CD4-positive, alpha-beta T cell (primary cell): ENCODE measurements at regions of chr2 and their contacts with region 1.

Region 1: DNA sequence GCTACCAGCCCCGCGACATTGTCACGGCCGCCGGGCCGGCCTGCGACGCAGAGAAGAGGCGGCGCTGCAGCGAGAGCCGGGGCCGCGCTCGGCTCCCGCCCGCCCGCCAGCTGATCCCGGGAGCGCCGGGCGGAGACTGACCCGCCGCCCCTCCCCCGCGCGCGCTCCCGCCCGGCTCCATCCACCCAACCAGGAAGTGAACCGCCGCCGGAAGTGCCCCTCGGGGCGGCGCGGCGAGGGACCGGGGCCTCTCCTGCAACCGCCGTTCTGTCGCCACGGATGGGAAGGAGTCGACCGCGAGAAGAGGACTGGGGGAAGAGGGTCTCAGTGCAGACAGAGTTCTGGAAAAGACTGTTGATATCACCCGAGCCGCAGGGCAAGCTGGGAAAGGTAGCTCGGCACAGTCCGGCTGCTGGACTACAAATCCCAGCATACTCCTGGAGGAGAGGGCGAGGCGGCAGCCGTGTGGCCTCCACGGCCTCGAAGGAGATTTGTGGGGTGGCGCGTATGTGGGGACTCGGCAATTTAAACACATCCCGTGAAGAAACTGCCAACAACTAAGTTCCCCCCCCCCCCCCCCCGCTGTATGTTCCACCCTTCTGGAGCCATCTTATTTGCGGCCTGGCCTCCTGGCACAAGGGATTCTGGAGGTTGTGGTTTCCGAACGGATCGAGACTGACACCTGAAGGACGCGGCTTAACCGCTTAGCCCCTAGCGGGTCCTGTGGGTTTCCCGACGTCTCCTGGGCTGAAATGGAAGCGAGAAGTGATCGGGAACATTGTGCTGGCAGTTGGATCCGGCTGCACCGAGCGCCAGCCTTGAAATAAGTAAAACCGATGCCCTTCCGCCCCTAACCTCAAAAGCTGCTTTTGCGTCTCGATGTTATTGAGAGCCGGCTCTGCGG is at the start of gene AAK1:
- DNase-seq: peak; percentile 64 to 91 (median 78)
- ATAC-seq: peak; percentile 40
- H3K4me3 ChIP-seq: peak within 1 kb of the TSS; percentile 85
- H3K4me3 Mint-ChIP-seq: peak within 1 kb of the TSS; percentile 99
- H3K27ac ChIP-seq: peak within 1 kb of the TSS; percentile 87 to 90
- H3K27ac Mint-ChIP-seq: peak within 1 kb of the TSS; percentile 95
- H3K4me1 ChIP-seq: peaks cover 56% of the 10 kb centered on the region
- H3K4me1 Mint-ChIP-seq: peaks cover 67% of the 10 kb centered on the region
- H3K27me3 ChIP-seq: no peaks in the 10 kb centered on the region
- H3K27me3 Mint-ChIP-seq: no peaks in the 10 kb centered on the region
- CTCF ChIP-seq: no peak
- total RNA-seq, gene AAK1: 201 to 208 TPM

Region 2: DNA sequence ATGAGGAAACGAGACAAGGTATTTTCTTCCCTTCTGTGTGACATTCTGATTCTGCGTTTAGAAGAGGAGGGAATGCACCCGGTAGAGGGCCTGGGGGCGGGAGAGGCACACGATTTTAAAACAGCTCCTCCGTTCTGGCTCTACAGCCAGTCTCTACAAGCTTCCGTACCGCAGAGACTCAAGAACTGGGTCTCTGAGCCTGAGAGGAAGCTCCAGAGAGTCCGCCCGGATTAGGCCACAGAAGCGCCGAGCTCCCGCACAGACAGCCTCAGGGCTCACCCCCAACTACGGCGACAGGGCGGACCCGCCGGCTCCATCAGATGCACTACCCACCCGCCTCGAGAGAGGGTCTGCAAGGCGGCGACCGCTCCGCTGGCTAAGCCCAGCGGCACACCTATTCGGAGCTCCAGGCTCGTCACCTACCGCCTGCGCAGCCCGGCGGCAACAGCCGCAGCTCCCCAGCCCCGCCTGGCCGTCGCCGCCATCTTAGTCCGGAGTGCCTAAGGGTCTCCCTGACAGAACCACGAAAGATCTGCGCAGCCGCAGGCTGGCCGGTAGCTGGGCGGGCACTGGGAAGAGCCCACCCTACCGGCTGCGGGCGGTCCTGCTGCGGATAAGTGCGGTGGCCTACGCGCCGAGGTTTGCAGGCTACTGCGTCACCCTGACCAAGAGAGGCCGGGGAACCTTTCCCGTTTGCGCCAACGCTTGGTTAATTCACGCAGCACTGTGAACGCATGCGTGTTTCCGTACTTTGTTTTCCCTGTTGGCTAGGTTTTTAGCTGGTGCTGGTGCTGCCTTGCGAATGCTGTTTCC is 206.7 kb before region 1 on chr2 and contains the start of gene NFU1:
- CTCF ChIA-PET with region 1: interaction called, 3 read pairs
- POLR2A ChIA-PET with region 1: interaction called, 29 read pairs
- intact Hi-C with region 1: loop called (anchors 2 to 5 kb)
- DNase-seq: peak; percentile 70 to 95 (median 82)
- ATAC-seq: peak; percentile 77
- H3K4me3 ChIP-seq: peak within 1 kb of the TSS; percentile 81
- H3K4me3 Mint-ChIP-seq: peak within 1 kb of the TSS; percentile 94
- H3K27ac ChIP-seq: peak within 1 kb of the TSS; percentile 87 to 94
- H3K27ac Mint-ChIP-seq: peak within 1 kb of the TSS; percentile 99
- H3K4me1 ChIP-seq: peaks cover 19% of the 10 kb centered on the region
- H3K4me1 Mint-ChIP-seq: peaks cover 44% of the 10 kb centered on the region
- H3K27me3 ChIP-seq: no peaks in the 10 kb centered on the region
- H3K27me3 Mint-ChIP-seq: no peaks in the 10 kb centered on the region
- CTCF ChIP-seq: peak; percentile 25
- total RNA-seq, gene NFU1: 18.5 to 22.2 TPM

Region 3: GRCh38 chr2:69589973-69590652 is 53.7 kb before region 1 on chr2:
- CTCF ChIA-PET with region 1: no interaction called
- POLR2A ChIA-PET with region 1: interaction called, 7 read pairs
- intact Hi-C with region 1: loop called (anchors 2 to 5 kb)
- DNase-seq: no peak
- ATAC-seq: peak; percentile 64
- H3K4me3 ChIP-seq: no peak overlapping the region
- H3K4me3 Mint-ChIP-seq: peak overlapping the region; percentile 56
- H3K27ac ChIP-seq: no peak overlapping the region
- H3K27ac Mint-ChIP-seq: peak overlapping the region; percentile 76
- H3K4me1 ChIP-seq: peaks cover 60% of the 10 kb centered on the region
- H3K4me1 Mint-ChIP-seq: peaks cover 83% of the 10 kb centered on the region
- H3K27me3 ChIP-seq: no peaks in the 10 kb centered on the region
- H3K27me3 Mint-ChIP-seq: no peaks in the 10 kb centered on the region
- CTCF ChIP-seq: no peak

Region 4: GRCh38 chr2:69625078-69625795 is 18.6 kb before region 1 on chr2:
- CTCF ChIA-PET with region 1: interaction called, 7 read pairs
- POLR2A ChIA-PET with region 1: interaction called, 25 read pairs
- intact Hi-C with region 1: loop called (anchors 2 kb)
- DNase-seq: peak in 1 of 14 experiments; percentile 46
- ATAC-seq: peak; percentile 37
- H3K4me3 ChIP-seq: no peak overlapping the region
- H3K4me3 Mint-ChIP-seq: no peak overlapping the region
- H3K27ac ChIP-seq: no peak overlapping the region
- H3K27ac Mint-ChIP-seq: no peak overlapping the region
- H3K4me1 ChIP-seq: peaks cover 75% of the 10 kb centered on the region
- H3K4me1 Mint-ChIP-seq: peaks cover 5% of the 10 kb centered on the region
- H3K27me3 ChIP-seq: no peaks in the 10 kb centered on the region
- H3K27me3 Mint-ChIP-seq: no peaks in the 10 kb centered on the region
- CTCF ChIP-seq: no peak

Region 5: GRCh38 chr2:69683101-69683971 is 39.5 kb after region 1 on chr2:
- CTCF ChIA-PET with region 1: interaction called, 3 read pairs
- POLR2A ChIA-PET with region 1: interaction called, 65 read pairs
- intact Hi-C with region 1: no loop called
- DNase-seq: no peak
- ATAC-seq: no peak
- H3K4me3 ChIP-seq: no peak overlapping the region
- H3K4me3 Mint-ChIP-seq: peak overlapping the region; percentile 42
- H3K27ac ChIP-seq: no peak overlapping the region
- H3K27ac Mint-ChIP-seq: peak overlapping the region; percentile 70
- H3K4me1 ChIP-seq: peaks cover 12% of the 10 kb centered on the region
- H3K4me1 Mint-ChIP-seq: peaks cover 73% of the 10 kb centered on the region
- H3K27me3 ChIP-seq: no peaks in the 10 kb centered on the region
- H3K27me3 Mint-ChIP-seq: no peaks in the 10 kb centered on the region
- CTCF ChIP-seq: no peak

Region 6: DNA sequence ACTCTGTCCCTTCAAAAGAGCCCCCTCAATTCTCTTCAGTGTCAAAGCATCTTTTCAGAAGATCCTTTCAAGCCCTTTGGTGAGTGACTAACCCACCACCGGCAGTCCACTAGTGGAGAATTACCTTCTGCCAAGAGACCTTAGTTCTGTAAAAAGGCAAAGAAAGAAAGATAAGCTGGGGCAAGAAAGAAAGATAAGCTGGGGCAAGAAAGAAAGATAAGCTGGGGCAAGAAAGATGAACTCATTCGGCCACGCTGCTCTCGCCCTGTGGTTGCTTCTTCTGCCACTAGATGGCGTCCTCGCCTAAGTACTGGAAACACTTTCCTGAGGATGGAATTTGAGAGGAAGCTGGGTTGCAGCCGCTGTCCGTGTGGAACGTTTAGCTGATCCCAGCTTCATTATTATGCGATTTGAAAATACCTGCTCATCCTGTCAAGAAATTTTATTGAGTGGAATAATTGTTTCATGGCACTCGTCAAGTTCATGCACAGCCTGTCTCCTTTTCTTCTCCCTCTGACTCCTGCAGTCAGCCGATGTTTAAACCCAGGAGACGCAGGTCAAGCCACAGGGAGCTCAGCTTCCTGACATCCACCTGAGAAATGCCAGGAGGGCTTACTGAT is 80.8 kb after region 1 on chr2:
- CTCF ChIA-PET with region 1: interaction called, 5 read pairs
- POLR2A ChIA-PET with region 1: interaction called, 16 read pairs
- intact Hi-C with region 1: no loop called
- DNase-seq: peak; percentile 69 to 91 (median 83)
- ATAC-seq: peak; percentile 85
- H3K4me3 ChIP-seq: no peak overlapping the region
- H3K4me3 Mint-ChIP-seq: peak overlapping the region; percentile 27
- H3K27ac ChIP-seq: no peak overlapping the region
- H3K27ac Mint-ChIP-seq: no peak overlapping the region
- H3K4me1 ChIP-seq: peaks cover 9% of the 10 kb centered on the region
- H3K4me1 Mint-ChIP-seq: peaks cover 7% of the 10 kb centered on the region
- H3K27me3 ChIP-seq: no peaks in the 10 kb centered on the region
- H3K27me3 Mint-ChIP-seq: no peaks in the 10 kb centered on the region
- CTCF ChIP-seq: peak; percentile 100

Region 7: DNA sequence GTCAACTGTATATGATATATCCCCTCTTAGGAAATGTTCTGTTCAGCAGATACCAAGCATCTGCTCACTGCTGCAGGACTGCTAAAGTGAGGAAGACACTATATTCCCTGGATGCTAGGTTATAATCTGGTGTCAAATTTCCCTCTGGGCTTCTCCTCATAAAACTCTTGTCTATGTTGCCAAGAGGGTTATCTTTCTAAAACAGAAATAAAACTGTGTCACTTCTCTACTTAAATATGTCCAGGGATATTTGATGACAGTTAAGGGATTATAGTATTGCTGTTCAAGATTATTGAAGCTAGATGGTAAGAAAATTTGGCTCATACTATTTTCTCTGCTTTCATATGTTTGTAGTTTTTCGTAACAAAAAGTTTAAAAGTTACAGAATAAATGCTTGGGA is 219.4 kb after region 1 on chr2:
- CTCF ChIA-PET with region 1: no interaction called
- POLR2A ChIA-PET with region 1: no interaction called
- intact Hi-C with region 1: no loop called
- DNase-seq: no peak
- ATAC-seq: no peak
- H3K4me3 ChIP-seq: no peak overlapping the region
- H3K4me3 Mint-ChIP-seq: no peak overlapping the region
- H3K27ac ChIP-seq: no peak overlapping the region
- H3K27ac Mint-ChIP-seq: no peak overlapping the region
- H3K4me1 ChIP-seq: no peaks in the 10 kb centered on the region
- H3K4me1 Mint-ChIP-seq: no peaks in the 10 kb centered on the region
- H3K27me3 ChIP-seq: no peaks in the 10 kb centered on the region
- H3K27me3 Mint-ChIP-seq: no peaks in the 10 kb centered on the region
- CTCF ChIP-seq: no peak

Region 8: DNA sequence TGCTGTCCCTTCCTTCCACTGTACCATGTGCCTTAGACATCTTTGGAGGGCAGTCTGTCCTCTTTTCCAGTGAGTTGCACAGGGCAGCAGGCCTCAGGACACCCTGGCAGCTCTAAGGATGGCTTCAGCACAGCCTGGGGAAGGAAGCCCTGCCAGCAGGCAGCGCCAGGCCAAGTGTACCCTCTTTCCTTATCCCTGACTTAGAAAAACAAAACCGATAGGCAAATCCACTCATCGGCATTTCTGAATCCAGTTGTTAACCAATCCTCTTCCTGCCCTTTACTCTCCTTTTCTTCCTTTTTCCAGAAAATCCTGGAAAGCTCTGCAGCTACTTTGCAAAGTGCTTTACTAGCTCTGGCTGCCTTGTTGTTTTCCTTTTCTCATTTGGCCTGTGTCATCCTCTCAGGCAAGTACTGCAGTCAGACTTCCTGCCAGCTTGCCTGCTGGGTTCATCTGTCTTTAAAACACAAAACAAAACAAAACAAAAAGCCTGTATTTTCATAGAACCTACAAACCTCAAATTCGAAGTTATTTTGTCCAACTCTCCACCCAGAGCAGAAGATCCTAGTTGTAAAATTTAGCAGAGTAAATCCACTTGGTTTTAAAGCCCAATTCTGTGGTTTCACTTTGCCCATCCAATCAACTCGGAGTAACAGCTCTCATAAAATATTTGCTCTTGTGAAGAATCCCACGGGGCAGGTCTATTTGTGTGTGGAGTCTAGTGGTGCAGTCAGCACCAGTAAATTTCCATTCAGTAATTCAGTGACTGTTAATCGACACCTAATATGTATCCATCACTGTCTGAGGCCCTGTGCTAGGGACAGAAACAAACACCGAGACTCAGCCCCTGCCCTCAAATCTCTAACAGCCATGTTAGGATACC is 488.6 kb after region 1 on chr2:
- CTCF ChIA-PET with region 1: no interaction called
- POLR2A ChIA-PET with region 1: interaction called, 10 read pairs
- intact Hi-C with region 1: no loop called
- DNase-seq: peak in 8 of 14 experiments; percentile 34 to 80 (median 60)
- ATAC-seq: peak; percentile 62
- H3K4me3 ChIP-seq: peak overlapping the region; percentile 54
- H3K4me3 Mint-ChIP-seq: peak overlapping the region; percentile 83
- H3K27ac ChIP-seq: peak overlapping the region; percentile 76 to 84
- H3K27ac Mint-ChIP-seq: peak overlapping the region; percentile 96
- H3K4me1 ChIP-seq: peaks cover 88% of the 10 kb centered on the region
- H3K4me1 Mint-ChIP-seq: peaks cover 72% of the 10 kb centered on the region
- H3K27me3 ChIP-seq: no peaks in the 10 kb centered on the region
- H3K27me3 Mint-ChIP-seq: no peaks in the 10 kb centered on the region
- CTCF ChIP-seq: no peak